Right ventricle myocardium inferior (tissue), 1 donor: ENCODE measurements at regions of chr6 and their contacts with region 1.

Region 1: DNA sequence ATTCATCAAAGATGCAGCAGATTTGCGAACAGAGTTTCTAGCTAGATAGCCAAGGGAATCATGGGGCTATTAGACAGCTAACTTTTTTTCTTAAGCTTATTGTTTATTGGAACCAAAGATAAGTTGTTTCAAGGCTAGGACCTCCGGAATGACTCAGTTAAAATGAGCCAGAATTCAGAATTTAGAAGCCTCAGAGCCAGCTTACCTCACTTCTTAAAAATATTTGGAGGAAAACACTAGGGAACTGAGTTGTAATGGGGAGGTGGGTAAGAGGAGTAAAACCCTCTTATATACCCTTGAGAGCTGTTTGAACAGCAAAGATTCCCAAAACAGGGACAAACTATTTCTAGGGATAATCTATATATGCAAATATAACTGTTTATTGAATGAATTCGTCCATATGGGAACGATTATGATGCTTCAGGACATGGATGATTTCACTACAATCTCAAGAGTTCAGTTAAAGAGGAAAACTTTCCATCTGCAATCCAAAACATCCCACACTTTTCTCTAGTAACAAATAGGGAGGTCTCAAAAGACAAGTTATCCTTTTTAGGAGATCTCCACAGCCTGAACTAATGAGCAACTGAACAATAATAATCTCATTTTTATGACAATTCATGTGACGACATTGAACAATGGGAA is 12.6 kb upstream of the CARMIL1 start:
- DNase-seq: no peak
- ATAC-seq: no peak

Region 2: DNA sequence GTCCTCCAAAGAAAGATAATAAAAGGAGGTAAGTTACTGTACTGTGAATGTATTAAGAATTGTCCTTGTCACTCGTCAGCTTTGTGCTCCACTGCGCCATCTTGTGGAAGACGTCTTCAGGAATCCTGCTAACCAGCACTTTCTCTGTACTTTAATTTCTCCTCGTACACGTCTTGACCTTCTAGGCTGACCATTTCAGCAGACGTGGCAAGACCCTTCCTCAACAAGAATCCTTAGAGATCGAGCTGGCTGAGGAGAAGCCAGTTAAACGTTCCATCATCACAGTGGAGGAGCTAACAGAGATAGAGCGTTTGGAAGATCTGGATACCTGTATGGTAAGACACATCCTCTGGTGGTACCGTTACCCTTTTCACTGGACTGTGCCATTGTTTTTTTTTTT is 289.9 kb after region 1 on chr6:
- intact Hi-C with region 1: loop called (anchors 5 kb)
- DNase-seq: peak; percentile 85
- ATAC-seq: no peak

Region 3: DNA sequence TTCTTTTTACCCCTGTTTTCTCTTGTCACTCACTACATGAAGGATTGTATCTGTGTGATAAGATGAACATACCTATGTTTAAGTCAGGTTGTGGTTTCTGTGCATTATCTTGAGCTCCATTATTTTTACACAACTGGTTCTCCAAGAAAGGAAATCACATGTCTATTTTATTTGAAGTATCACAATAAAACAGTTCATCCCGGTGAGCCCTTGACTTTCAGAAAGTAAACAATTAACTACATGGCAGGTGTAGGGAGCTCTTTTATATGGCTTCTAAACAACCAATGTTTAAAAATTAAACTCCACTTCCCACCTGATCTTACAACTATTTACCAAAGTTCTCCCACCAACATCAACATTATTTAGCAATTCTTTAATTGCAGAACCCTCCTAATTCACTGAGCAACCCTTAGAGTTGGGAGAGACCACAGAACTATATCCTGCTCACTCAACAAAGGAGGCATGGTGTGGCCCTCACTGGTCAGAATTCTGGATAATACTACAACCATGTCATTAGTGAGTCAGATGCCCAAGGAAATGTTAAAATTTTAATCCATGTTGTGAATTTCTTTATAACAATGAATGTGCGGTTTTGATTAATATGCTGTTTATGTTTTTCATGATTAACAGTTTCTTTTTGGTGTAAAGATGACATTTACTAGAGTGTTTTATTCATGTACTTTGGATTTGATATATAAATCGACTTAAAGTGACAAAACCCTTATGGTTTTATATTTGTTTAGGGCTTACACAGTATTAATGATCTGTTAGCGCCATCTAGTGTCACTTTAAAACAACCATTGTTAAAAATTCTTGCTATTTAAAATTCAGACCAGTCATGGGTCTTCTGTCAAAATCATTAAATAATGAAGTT is 335.5 kb after region 1 on chr6:
- intact Hi-C with region 1: loop called (anchors 5 kb)
- DNase-seq: no peak
- ATAC-seq: no peak